Upper lobe of right lung (tissue), 1 donor: ENCODE measurements at regions of chr4 and their contacts with region 1.

Region 1: GRCh38 chr4:150242820-150243458 is 164.7 kb downstream of the DCLK2 start:
- DNase-seq: no peak
- ATAC-seq: peak; percentile 73
- H3K4me3 ChIP-seq: no peak overlapping the region
- H3K27ac ChIP-seq: no peak overlapping the region
- H3K4me1 ChIP-seq: no peaks in the 10 kb centered on the region
- H3K27me3 ChIP-seq: no peaks in the 10 kb centered on the region
- CTCF ChIP-seq: peak; percentile 81

Region 2: GRCh38 chr4:149638073-149638472 is 604.9 kb before region 1 on chr4:
- intact Hi-C with region 1: no loop called
- DNase-seq: no peak
- ATAC-seq: no peak
- H3K4me3 ChIP-seq: no peak overlapping the region
- H3K27ac ChIP-seq: no peak overlapping the region
- H3K4me1 ChIP-seq: no peaks in the 10 kb centered on the region
- H3K27me3 ChIP-seq: no peaks in the 10 kb centered on the region
- CTCF ChIP-seq: no peak

Region 3: DNA sequence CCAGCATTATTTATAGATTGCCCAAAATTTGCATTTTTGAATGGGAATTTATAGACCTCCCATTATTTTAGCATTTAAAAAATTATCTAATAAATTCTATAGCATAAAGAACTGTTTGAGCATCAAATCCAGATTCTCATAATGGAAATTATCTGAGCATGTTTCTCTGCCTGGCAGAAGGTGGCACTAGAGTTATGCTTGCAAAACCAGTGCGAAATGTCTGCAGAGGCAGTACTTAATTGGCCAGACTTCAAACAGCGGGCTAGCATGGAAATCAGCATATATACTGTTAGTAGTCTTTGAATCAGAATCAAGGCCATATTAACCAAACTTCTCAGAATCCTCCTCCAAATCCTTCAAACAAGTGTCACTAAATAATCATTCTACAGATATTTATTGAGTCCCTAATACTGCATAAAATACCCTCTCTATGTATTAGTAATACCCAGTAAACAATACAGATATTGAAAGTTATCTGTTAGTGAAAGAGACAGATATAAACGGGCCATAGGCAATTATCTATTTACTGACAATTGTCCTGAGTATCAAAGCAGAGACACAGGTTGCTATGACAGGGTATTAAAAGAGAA is 243.4 kb before region 1 on chr4:
- intact Hi-C with region 1: loop called (anchors 10 kb)
- DNase-seq: no peak
- ATAC-seq: peak; percentile 45
- H3K4me3 ChIP-seq: no peak overlapping the region
- H3K27ac ChIP-seq: no peak overlapping the region
- H3K4me1 ChIP-seq: no peaks in the 10 kb centered on the region
- H3K27me3 ChIP-seq: no peaks in the 10 kb centered on the region
- CTCF ChIP-seq: peak; percentile 75

Region 4: DNA sequence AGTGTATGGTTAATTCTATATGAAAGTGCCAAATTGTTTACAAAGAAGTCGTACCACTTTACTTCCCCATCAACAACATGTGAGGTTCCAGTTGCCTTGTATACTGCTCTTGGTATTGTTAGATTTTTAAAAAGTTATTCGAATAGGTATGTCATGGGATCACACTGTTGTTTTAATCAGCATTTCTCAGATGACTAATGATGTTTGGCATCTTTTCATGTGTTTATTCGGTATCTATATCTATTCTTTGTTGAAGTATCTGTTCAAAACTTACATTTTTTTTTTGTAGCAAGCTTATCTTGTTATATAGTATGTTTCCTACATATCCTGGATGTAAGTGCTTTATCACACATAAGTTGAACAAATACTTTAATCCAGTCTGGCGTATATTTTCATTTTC is 239.6 kb after region 1 on chr4:
- intact Hi-C with region 1: no loop called
- DNase-seq: no peak
- ATAC-seq: no peak
- H3K4me3 ChIP-seq: no peak overlapping the region
- H3K27ac ChIP-seq: no peak overlapping the region
- H3K4me1 ChIP-seq: no peaks in the 10 kb centered on the region
- H3K27me3 ChIP-seq: no peaks in the 10 kb centered on the region
- CTCF ChIP-seq: no peak